ENCODE measurements at regions of chr1 and their contacts with region 1.

Region 1: GRCh38 chr1:160291248-160292220 is 6.6 kb upstream of the PEX19 start:
- DNase-seq: peak; percentile 83
- H3K4me3 Mint-ChIP-seq: no peak overlapping the region
- H3K27ac Mint-ChIP-seq: peak overlapping the region; percentile 46
- H3K4me1 Mint-ChIP-seq: peaks cover 4% of the 10 kb centered on the region
- H3K27me3 Mint-ChIP-seq: no peaks in the 10 kb centered on the region

Region 2: DNA sequence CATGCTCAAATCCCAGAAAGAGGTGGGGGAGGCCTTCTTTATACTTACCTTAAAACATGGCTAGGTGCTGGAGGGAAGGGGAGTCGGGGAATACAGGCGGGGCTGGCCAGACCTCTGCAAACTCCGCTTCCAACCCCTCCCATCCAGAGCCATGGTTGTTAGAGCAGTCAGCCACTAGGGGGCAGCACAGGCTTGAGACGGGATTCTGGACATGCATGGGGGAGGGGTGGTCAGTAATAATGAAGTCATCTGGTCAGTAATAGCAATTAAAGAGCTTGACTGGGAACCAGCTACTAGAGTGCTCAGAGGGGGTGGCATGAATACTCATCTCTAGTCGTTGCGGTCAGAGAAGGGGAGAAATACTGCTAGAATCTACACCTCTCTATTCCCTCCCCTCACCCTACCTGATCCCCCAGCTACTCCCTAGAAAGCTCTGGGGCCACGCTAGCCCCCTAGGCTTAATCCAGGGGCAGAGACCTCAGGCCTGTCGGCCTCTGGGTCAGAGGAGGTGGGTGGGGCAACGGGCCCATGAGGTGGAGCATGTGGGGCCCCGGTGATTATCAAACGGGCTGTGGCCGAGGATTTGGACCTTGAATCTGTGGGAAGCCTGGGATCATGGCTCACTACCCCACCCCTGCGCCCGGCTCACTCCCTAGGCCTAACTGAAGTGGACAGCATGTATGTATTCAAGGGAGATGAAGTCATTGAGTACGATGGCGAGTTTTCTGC is 98.3 kb before region 1 on chr1:
- CTCF ChIA-PET with region 1: interaction called, 139 read pairs
- intact Hi-C with region 1: loop called (anchors 1 kb)
- DNase-seq: peak; percentile 91
- H3K4me3 Mint-ChIP-seq: no peak overlapping the region
- H3K27ac Mint-ChIP-seq: no peak overlapping the region
- H3K4me1 Mint-ChIP-seq: no peaks in the 10 kb centered on the region
- H3K27me3 Mint-ChIP-seq: no peaks in the 10 kb centered on the region

Region 3: DNA sequence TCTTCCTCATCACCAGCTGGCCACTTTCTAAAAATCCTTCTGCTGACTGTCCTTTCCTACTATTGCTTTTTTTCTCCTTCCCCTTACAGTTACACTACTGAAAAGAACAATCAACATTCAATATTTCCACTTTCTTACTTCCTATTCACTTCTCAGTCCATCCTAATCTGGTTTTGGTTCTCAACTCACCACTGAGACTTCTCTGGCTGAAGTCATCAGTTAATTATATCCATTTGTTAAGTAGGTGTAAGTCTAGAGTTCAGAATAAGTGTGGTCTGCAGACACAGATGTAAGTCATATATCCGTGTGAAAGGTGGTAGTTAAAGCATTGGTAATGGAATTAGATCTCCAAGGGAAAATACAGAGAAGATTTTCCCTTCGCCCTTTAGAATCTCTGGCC is 64.9 kb before region 1 on chr1:
- CTCF ChIA-PET with region 1: interaction called, 29 read pairs
- intact Hi-C with region 1: no loop called
- DNase-seq: no peak
- H3K4me3 Mint-ChIP-seq: no peak overlapping the region
- H3K27ac Mint-ChIP-seq: no peak overlapping the region
- H3K4me1 Mint-ChIP-seq: no peaks in the 10 kb centered on the region
- H3K27me3 Mint-ChIP-seq: no peaks in the 10 kb centered on the region

Region 4: GRCh38 chr1:160251687-160252526 is 39.6 kb before region 1 on chr1:
- CTCF ChIA-PET with region 1: interaction called, 39 read pairs
- intact Hi-C with region 1: loop called (anchors 5 kb)
- DNase-seq: peak; percentile 73
- H3K4me3 Mint-ChIP-seq: no peak overlapping the region
- H3K27ac Mint-ChIP-seq: no peak overlapping the region
- H3K4me1 Mint-ChIP-seq: peaks cover 22% of the 10 kb centered on the region
- H3K27me3 Mint-ChIP-seq: no peaks in the 10 kb centered on the region

Region 5: GRCh38 chr1:160277330-160277729 is 14.2 kb before region 1 on chr1:
- CTCF ChIA-PET with region 1: interaction called, 23 read pairs
- intact Hi-C with region 1: no loop called
- DNase-seq: no peak
- H3K4me3 Mint-ChIP-seq: no peak overlapping the region
- H3K27ac Mint-ChIP-seq: no peak overlapping the region
- H3K4me1 Mint-ChIP-seq: no peaks in the 10 kb centered on the region
- H3K27me3 Mint-ChIP-seq: no peaks in the 10 kb centered on the region

Region 6: DNA sequence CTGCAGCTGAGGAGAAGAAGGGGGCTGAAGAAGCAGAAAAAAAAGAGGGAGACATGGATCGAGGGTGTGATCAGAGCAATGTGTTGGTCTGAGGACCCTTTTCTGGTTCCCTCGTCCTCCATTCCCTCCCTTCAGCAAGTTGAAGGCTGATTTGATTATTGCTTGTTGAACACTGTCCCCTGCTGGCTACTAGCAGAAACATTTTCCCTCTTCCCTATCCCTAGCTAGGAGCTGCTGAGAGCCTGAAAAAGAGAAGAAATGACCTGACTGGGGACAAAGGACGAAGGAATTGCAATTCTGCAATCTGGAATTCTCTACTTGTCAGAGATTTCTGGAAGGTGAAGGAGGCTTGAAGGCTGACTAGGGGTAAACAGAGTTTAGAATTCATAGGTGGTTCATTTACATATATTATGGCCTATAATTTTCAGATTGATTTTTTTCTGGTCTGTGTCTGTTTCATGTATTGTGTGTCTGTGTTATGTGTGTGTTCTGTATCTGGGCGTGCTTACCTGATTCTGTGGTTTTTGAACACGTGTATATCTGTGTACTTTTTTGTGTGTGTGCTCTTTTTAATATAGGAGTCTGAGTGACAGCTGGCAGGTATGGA is 85.1 kb after region 1 on chr1:
- CTCF ChIA-PET with region 1: interaction called, 34 read pairs
- intact Hi-C with region 1: loop called (anchors 1 kb)
- DNase-seq: peak; percentile 55
- H3K4me3 Mint-ChIP-seq: no peak overlapping the region
- H3K27ac Mint-ChIP-seq: no peak overlapping the region
- H3K4me1 Mint-ChIP-seq: peaks cover 13% of the 10 kb centered on the region
- H3K27me3 Mint-ChIP-seq: no peaks in the 10 kb centered on the region